Colonic mucosa (tissue), 4 donors: ENCODE measurements at regions of chr12 and their contacts with region 1.

Region 1: DNA sequence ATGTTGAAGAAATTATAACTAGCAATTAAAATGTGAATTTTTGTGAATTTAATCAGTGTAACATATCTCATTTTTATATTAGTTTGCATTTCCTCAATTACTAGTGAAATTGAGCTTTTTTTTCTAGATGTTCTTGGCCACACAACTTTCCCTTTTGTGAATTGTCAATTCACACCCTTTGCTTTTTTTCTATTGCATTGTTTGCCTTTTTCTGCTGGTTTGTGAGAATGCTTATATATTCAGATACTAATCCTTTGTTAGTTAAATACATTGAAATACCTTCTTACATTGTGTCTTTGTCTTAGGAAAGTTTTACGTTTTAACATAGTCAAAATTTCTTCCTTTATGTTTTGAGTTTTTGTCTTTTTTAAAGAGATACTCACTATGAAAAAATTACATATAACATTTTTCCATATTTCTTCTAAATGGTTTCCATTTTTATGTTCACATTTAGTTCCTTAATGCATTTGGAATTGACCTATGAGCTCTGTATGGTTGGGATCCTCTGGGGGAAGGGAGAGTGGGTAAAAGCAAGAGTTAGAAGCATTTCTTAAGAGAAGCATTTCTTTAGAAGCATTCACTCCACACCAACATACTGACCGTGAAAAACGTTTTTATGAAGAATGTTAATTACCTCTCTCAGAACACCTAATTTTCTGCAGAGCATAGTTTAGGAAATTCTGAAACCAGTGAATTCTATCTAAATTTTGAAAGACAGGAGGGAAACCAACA is 126.0 kb downstream of the CAPZA3 start:
- DNase-seq: no peak
- H3K4me3 ChIP-seq: no peak overlapping the region
- H3K27ac ChIP-seq: no peak overlapping the region
- H3K4me1 ChIP-seq: no peaks in the 10 kb centered on the region
- H3K27me3 ChIP-seq: no peaks in the 10 kb centered on the region
- CTCF ChIP-seq: no peak

Region 2: GRCh38 chr12:19186722-19187661 is 323.1 kb after region 1 on chr12:
- intact Hi-C with region 1: loop called (anchors 2 kb)
- DNase-seq: no peak
- H3K4me3 ChIP-seq: no peak overlapping the region
- H3K27ac ChIP-seq: no peak overlapping the region
- H3K4me1 ChIP-seq: no peaks in the 10 kb centered on the region
- H3K27me3 ChIP-seq: no peaks in the 10 kb centered on the region
- CTCF ChIP-seq: peak; percentile 41